Dendritic cell treated with granulocyte-macrophage colony-stimulating factor and Interleukin-4, amounts not matched to agents 40 ng/mL and 50 ng/mL, for 4 days (primary cell): ENCODE measurements at regions of chrX and their contacts with region 1.

Region 1: DNA sequence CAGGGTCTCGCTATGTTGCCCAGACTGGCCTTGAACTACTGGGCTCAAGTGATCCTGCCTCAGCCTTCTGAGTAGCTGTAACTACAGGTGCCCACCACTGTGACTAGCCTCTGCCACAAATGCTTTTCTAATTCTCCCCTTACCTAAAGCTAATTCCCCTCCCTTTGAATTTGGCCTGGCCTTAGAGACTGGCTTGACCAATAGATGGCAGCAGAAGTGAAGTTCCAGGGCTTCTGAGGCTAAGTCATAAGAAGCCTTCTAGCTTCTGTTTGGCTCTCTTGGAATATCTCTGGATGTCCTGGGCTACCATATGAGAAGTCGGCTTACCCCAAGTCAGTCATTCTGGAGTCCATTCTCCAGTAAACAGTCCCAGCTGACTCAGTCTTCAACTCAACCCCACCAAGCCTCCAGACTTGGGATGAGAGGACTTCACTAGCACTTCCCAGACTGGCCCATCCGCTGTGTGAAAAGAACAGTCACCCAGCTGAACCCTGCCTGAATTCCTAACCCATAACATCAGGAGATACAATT is 61.0 kb downstream of the HPRT1 start:
- H3K4me3 Mint-ChIP-seq: no peak overlapping the region
- H3K27ac Mint-ChIP-seq: no peak overlapping the region
- H3K4me1 Mint-ChIP-seq: no peaks in the 10 kb centered on the region
- H3K27me3 Mint-ChIP-seq: no peaks in the 10 kb centered on the region

Region 2: DNA sequence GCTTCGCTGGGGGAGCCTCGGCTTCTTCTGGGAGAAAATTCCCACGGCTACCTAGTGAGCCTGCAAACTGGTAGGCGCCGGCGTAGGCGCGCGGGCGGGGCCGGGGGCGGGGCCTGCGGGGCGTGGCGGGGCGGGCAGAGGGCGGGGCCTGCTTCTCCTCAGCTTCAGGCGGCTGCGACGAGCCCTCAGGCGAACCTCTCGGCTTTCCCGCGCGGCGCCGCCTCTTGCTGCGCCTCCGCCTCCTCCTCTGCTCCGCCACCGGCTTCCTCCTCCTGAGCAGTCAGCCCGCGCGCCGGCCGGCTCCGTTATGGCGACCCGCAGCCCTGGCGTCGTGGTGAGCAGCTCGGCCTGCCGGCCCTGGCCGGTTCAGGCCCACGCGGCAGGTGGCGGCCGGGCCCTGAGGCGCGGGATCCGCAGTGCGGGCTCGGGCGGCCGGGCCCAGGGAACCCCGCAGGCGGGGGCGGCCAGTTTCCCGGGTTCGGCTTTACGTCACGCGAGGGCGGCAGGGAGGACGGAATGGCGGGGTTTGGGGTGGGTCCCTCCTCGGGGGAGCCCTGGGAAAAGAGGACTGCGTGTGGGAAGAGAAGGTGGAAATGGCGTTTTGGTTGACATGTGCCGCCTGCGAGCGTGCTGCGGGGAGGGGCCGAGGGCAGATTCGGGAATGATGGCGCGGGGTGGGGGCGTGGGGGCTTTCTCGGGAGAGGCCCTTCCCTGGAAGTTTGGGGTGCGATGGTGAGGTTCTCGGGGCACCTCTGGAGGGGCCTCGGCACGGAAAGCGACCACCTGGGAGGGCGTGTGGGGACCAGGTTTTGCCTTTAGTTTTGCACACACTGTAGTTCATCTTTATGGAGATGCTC is 60.7 kb before region 1 on chrX and contains the start of gene HPRT1:
- intact Hi-C with region 1: no loop called
- H3K4me3 Mint-ChIP-seq: peak within 1 kb of the TSS; percentile 88
- H3K27ac Mint-ChIP-seq: peak within 1 kb of the TSS; percentile 88
- H3K4me1 Mint-ChIP-seq: no peaks in the 10 kb centered on the region
- H3K27me3 Mint-ChIP-seq: peaks cover 1% of the 10 kb centered on the region

Region 3: GRCh38 chrX:134764212-134764785 is 243.4 kb after region 1 on chrX:
- intact Hi-C with region 1: loop called (anchors 5 kb)
- H3K4me3 Mint-ChIP-seq: no peak overlapping the region
- H3K27ac Mint-ChIP-seq: no peak overlapping the region
- H3K4me1 Mint-ChIP-seq: no peaks in the 10 kb centered on the region
- H3K27me3 Mint-ChIP-seq: no peaks in the 10 kb centered on the region